IMR-90 (cell line): ENCODE measurements at regions of chr10 and their contacts with region 1.

Region 1: GRCh38 chr10:18340496-18341051 is 200.3 kb downstream of the CACNB2 start:
- DNase-seq: peak; percentile 45
- ATAC-seq: peak; percentile 86
- H3K4me3 ChIP-seq: peak overlapping the region; percentile 51
- H3K27ac ChIP-seq: peak overlapping the region; percentile 70
- H3K4me1 ChIP-seq: peaks cover 1% of the 10 kb centered on the region; the same call in 1 of the 2 replicates
- H3K27me3 ChIP-seq: no peaks in the 10 kb centered on the region
- CTCF ChIP-seq: no peak
- POLR2A ChIP-seq: no peak
- RAD21 ChIP-seq: no peak

Region 2: GRCh38 chr10:18359812-18360211 is 19.2 kb after region 1 on chr10:
- CTCF ChIA-PET with region 1: no interaction called
- POLR2A ChIA-PET with region 1: no interaction called
- dilution Hi-C with region 1: no loop called
- in situ Hi-C with region 1: no loop called
- intact Hi-C with region 1: no loop called
- DNase-seq: no peak
- ATAC-seq: no peak
- H3K4me3 ChIP-seq: no peak overlapping the region
- H3K27ac ChIP-seq: no peak overlapping the region
- H3K4me1 ChIP-seq: no peaks in the 10 kb centered on the region
- H3K27me3 ChIP-seq: no peaks in the 10 kb centered on the region
- CTCF ChIP-seq: no peak
- POLR2A ChIP-seq: no peak
- RAD21 ChIP-seq: no peak

Region 3: DNA sequence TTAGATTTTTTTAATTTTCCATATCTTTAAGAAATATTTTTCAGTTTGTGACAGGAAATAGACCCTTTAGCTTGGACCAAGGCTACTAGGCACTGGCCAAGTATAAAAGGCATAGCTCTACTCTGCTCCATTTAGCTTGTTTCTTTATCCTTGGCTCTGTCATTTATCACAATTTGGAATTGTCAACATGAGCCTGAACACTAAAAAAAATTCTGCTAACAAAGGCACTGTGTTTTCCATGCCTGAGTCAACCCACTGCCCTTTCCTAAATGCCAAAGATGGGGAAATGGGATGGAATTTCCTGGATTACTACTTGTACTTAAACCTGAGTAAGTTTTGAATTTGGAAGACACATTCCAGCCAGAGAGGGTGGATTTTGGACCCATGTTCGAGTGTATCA is 182.5 kb after region 1 on chr10:
- CTCF ChIA-PET with region 1: no interaction called
- POLR2A ChIA-PET with region 1: no interaction called
- dilution Hi-C with region 1: no loop called
- in situ Hi-C with region 1: no loop called
- intact Hi-C with region 1: loop called (anchors 10 kb)
- DNase-seq: peak; percentile 22
- ATAC-seq: peak; percentile 30; the same call in 1 of the 2 replicates
- H3K4me3 ChIP-seq: no peak overlapping the region
- H3K27ac ChIP-seq: no peak overlapping the region
- H3K4me1 ChIP-seq: peaks cover 5% of the 10 kb centered on the region
- H3K27me3 ChIP-seq: no peaks in the 10 kb centered on the region
- CTCF ChIP-seq: no peak
- POLR2A ChIP-seq: no peak
- RAD21 ChIP-seq: no peak

Region 4: GRCh38 chr10:18651324-18652007 is 310.9 kb after region 1 on chr10 and contains the start of gene NSUN6:
- CTCF ChIA-PET with region 1: no interaction called
- POLR2A ChIA-PET with region 1: no interaction called
- dilution Hi-C with region 1: no loop called
- in situ Hi-C with region 1: no loop called
- intact Hi-C with region 1: loop called (anchors 5 kb)
- DNase-seq: peak; percentile 85
- ATAC-seq: peak; percentile 98
- H3K4me3 ChIP-seq: peak within 1 kb of the TSS; percentile 93
- H3K27ac ChIP-seq: peak within 1 kb of the TSS; percentile 78
- H3K4me1 ChIP-seq: no peaks in the 10 kb centered on the region
- H3K27me3 ChIP-seq: no peaks in the 10 kb centered on the region
- CTCF ChIP-seq: 0 out of 2 replicates have a peak, but pooled peaks have one; percentile 13
- POLR2A ChIP-seq: peak; percentile 81
- RAD21 ChIP-seq: 0 out of 2 replicates have a peak, but pooled peaks have one; percentile 2
- total RNA-seq, gene NSUN6: 11.4 and 11.5 TPM in 2 replicates